ENCODE measurements at regions of chr15 and their contacts with region 1.

Region 1: GRCh38 chr15:45166834-45167630 is 20.7 kb downstream of the SHF start:
- DNase-seq: peak; percentile 88 to 94 (median 94)
- H3K4me3 ChIP-seq: peak overlapping the region; percentile 51 to 77 (median 72)
- H3K27ac ChIP-seq: peak overlapping the region; percentile 88 to 91
- H3K4me1 ChIP-seq: peaks cover 0 to 49% (median 38%) of the 10 kb centered on the region in 4 experiments
- H3K27me3 ChIP-seq: no peaks in the 10 kb centered on the region

Region 2: DNA sequence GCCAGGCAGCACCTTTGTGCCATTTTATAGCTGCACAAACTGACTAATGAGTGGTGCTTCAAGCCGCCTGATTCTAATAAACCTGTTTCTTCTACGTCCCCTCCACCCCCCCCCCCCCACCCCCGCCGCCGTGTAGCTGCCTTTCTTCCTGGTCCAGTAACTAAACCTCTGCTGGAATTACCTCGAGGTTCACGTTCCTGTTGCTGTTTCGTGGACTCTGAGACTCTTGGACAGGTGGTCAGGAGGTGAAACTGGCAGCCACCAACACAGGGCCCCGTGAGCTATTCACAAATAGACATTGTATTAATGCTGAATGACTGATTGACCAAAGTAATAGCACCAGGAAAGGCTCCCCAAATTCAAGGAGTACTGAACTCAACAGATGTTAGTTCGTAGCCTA is 356.8 kb before region 1 on chr15:
- CTCF ChIA-PET with region 1: no interaction called
- POLR2A ChIA-PET with region 1: no interaction called
- DNase-seq: no peak
- H3K4me3 ChIP-seq: no peak overlapping the region
- H3K27ac ChIP-seq: no peak overlapping the region
- H3K4me1 ChIP-seq: no peaks in the 10 kb centered on the region
- H3K27me3 ChIP-seq: no peaks in the 10 kb centered on the region

Region 3: GRCh38 chr15:45048794-45049631 is 118.0 kb before region 1 on chr15:
- CTCF ChIA-PET with region 1: no interaction called
- POLR2A ChIA-PET with region 1: no interaction called
- DNase-seq: peak; percentile 82 to 95 (median 90)
- H3K4me3 ChIP-seq: peak overlapping the region in 2 of 7 experiments; percentile 16 to 33
- H3K27ac ChIP-seq: peak overlapping the region; percentile 44 to 85
- H3K4me1 ChIP-seq: peaks cover 0 to 23% (median 5%) of the 10 kb centered on the region in 4 experiments
- H3K27me3 ChIP-seq: no peaks in the 10 kb centered on the region

Region 4: DNA sequence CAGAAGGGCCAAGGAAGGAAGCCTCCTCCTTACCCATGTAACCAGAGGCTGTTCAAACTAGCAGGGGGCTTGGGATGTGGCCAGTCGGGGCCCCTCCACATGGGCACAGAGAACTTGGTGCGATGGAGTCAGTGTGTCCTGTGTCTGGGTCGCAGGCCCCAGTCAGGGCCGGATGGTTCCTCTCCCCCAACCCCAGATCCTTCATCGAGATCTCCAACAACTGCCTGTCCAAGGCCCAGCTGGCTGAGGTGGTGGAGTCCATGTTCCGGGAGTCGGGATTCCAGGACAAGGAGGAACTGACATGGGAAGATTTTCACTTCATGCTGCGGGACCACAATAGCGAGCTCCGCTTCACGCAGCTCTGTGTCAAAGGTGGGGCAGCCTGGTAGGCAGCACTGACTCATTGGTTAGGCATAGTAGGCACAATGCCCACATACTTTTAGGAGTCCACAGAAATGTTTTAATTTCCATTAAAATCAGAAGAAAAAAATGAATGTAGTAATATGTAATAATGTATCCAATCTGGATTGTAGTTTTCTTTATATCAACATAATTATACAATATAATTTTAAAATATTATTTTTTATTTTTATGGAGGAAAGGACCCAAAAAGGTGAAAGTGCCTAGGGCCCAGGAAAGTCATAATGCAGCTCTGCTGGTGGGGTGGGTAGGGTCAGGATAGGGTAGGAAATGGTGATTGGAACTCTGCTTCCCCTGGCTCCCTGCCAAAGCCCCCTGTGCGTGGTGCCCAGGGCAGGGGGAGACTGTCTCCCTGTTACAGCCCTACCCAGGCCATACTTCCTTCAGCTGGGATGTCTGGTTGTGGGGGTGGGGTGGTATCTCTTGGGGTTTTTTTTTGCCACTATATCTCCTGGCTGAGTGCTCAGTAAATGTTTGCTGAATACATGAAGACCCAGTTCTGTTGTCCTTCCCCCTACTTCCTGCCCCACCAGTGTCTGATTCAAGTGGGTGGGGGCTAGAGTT is 18.7 kb before region 1 on chr15:
- CTCF ChIA-PET with region 1: interaction called, 11 read pairs
- POLR2A ChIA-PET with region 1: no interaction called
- DNase-seq: no peak
- H3K4me3 ChIP-seq: no peak overlapping the region
- H3K27ac ChIP-seq: no peak overlapping the region
- H3K4me1 ChIP-seq: peaks cover 0 to 6% (median 4%) of the 10 kb centered on the region in 4 experiments
- H3K27me3 ChIP-seq: peaks cover 0 to 2% (median 0%) of the 10 kb centered on the region in 5 experiments

Region 5: GRCh38 chr15:45187894-45188830 is 21.1 kb after region 1 on chr15 and contains the start of gene SHF:
- CTCF ChIA-PET with region 1: interaction called, 118 read pairs
- POLR2A ChIA-PET with region 1: interaction called, 7 read pairs
- DNase-seq: peak; percentile 75 to 85 (median 85)
- H3K4me3 ChIP-seq: peak within 1 kb of the TSS; percentile 64 to 98 (median 82)
- H3K27ac ChIP-seq: peak within 1 kb of the TSS; percentile 75 to 85
- H3K4me1 ChIP-seq: peaks cover 0 to 49% (median 48%) of the 10 kb centered on the region in 4 experiments
- H3K27me3 ChIP-seq: no peaks in the 10 kb centered on the region

Region 6: GRCh38 chr15:45212493-45212892 is 45.5 kb after region 1 on chr15:
- CTCF ChIA-PET with region 1: interaction called, 19 read pairs
- POLR2A ChIA-PET with region 1: no interaction called
- DNase-seq: no peak
- H3K4me3 ChIP-seq: no peak overlapping the region
- H3K27ac ChIP-seq: no peak overlapping the region
- H3K4me1 ChIP-seq: no peaks in the 10 kb centered on the region
- H3K27me3 ChIP-seq: peaks cover 0 to 3% (median 0%) of the 10 kb centered on the region in 5 experiments

Region 7: GRCh38 chr15:45402162-45402954 is 235.3 kb after region 1 on chr15:
- CTCF ChIA-PET with region 1: interaction called, 88 read pairs
- POLR2A ChIA-PET with region 1: interaction called, 5 read pairs
- DNase-seq: peak; percentile 98 to 100 (median 99)
- H3K4me3 ChIP-seq: peak overlapping the region; percentile 75 to 97 (median 90)
- H3K27ac ChIP-seq: peak overlapping the region; percentile 77 to 88
- H3K4me1 ChIP-seq: peaks cover 9 to 33% (median 23%) of the 10 kb centered on the region in 4 experiments
- H3K27me3 ChIP-seq: no peaks in the 10 kb centered on the region

Region 8: GRCh38 chr15:45611305-45611704 is 444.3 kb after region 1 on chr15:
- CTCF ChIA-PET with region 1: no interaction called
- POLR2A ChIA-PET with region 1: no interaction called
- DNase-seq: peak in 2 of 3 donors; percentile 42 to 56
- H3K4me3 ChIP-seq: no peak overlapping the region
- H3K27ac ChIP-seq: no peak overlapping the region
- H3K4me1 ChIP-seq: no peaks in the 10 kb centered on the region
- H3K27me3 ChIP-seq: no peaks in the 10 kb centered on the region

Measured in common myeloid progenitor, CD34-positive (primary cell).